ENCODE measurements at regions of chr1 and their contacts with region 1.

Region 1: GRCh38 chr1:107750358-107750959 is 214.5 kb downstream of the VAV3 start:
- ATAC-seq: peak; percentile 27 to 88 (median 72)
- H3K4me3 ChIP-seq: no peak overlapping the region
- H3K27ac ChIP-seq: no peak overlapping the region
- H3K4me1 ChIP-seq: no peaks in the 10 kb centered on the region

Region 2: GRCh38 chr1:107277022-107277421 is 473.4 kb before region 1 on chr1:
- in situ Hi-C with region 1: loop called in 1 of 9 experiments (anchors 25 kb)
- ATAC-seq: peak in 5 of 8 experiments; percentile 53 to 83 (median 72)
- H3K4me3 ChIP-seq: no peak overlapping the region
- H3K27ac ChIP-seq: no peak overlapping the region
- H3K4me1 ChIP-seq: no peaks in the 10 kb centered on the region

Region 3: DNA sequence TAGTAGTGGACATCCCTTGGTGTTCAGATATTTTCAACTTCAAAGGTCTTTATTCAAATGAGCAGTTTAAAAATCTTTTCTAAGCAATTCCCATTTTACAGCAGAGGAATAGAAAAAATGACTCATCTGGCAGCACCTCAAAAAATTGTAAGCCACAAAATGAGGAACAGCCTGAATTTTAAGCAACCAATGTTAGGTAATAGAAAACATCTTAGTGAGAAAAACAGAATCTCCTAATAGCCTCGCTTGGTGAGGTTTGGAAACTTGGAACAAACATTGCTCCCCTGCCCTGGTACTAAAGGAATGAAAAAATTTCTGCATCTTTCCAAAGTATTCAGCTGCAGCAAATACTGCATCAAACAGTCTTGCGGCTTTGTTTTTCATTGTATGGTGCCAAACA is 345.2 kb before region 1 on chr1:
- in situ Hi-C with region 1: loop called in 1 of 9 experiments (anchors 25 kb)
- ATAC-seq: peak in 1 of 8 experiments; percentile 27
- H3K4me3 ChIP-seq: no peak overlapping the region
- H3K27ac ChIP-seq: no peak overlapping the region
- H3K4me1 ChIP-seq: peaks cover 0 to 9% of the 10 kb centered on the region in 2 donors

Region 4: DNA sequence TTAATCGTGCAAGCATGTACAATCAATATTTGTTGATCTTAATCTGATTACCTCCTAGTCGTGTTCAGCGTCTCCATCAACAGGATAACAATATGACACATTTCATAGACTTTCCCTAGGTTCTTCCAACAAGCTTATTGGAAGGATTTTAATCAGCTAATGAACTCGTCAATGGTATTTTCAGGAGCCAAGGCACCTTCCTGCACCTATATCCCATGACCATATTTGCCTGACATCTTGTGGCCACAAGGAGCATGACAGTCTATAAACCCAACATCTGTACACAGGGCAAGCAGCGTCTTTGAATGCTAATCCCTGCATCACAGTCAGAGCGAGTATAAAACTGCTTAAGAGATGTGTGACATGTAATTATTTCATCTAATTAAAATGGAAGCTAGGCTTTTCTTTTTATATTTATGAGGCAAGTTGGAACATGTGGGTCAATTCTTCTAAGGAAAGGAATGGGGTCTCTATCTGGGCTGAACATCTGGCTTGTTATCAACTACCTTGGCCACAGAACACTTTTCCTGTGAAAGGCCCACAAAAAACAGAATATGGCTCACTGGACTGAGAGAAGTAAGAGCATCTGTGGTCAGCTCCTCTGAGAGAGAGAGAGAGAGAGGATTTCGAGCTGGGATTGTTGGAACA is 220.8 kb before region 1 on chr1:
- in situ Hi-C with region 1: loop called in 2 of 9 experiments (anchors 10 to 25 kb)
- ATAC-seq: peak; percentile 70 to 96 (median 94)
- H3K4me3 ChIP-seq: no peak overlapping the region
- H3K27ac ChIP-seq: no peak overlapping the region
- H3K4me1 ChIP-seq: peaks cover 18 to 19% of the 10 kb centered on the region in 2 donors

Region 5: DNA sequence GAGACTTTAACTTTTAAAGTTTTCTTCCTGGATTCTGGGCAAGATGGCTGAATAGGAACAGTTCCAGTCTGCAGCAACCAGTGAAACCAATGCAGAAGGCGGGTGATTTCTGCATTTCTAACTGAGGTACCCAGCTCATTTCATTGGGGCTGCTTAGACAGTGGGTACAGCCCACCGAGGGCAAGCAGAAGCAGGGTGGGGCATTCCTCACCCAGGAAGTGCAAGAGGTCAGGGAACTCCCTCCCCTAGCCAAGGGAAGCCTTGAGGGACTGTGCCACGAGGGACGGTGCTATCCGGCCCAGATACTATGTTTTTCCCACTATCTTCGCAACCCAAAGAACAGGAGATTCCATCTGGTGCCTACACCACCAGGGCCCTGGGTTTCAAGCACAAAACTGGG is 93.5 kb after region 1 on chr1:
- in situ Hi-C with region 1: no loop called
- ATAC-seq: no peak
- H3K4me3 ChIP-seq: no peak overlapping the region
- H3K27ac ChIP-seq: no peak overlapping the region
- H3K4me1 ChIP-seq: no peaks in the 10 kb centered on the region

Region 6: DNA sequence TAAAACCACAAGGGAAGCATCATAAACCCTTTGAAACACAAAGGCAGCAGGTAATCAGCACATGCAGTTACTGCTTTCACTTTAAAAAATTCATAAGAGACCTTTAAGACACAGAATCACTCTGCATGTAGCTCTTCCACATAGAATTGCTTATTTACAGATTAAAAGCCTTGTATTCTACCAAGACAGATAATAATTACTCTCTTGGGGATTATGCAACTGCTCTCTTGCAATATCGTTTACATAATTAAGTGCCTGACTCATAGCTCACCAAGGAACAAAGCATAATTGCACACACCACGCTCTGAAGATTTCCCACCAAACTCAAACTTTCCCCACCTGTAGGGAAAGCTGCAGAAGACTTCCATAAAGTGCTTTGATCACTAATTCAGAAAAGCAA is 126.6 kb after region 1 on chr1:
- in situ Hi-C with region 1: no loop called
- ATAC-seq: peak; percentile 38 to 90 (median 52)
- H3K4me3 ChIP-seq: no peak overlapping the region
- H3K27ac ChIP-seq: no peak overlapping the region
- H3K4me1 ChIP-seq: no peaks in the 10 kb centered on the region

Region 7: GRCh38 chr1:108107658-108108518 is 357.4 kb after region 1 on chr1:
- in situ Hi-C with region 1: no loop called
- ATAC-seq: peak in 2 of 8 experiments; percentile 97 to 98
- H3K4me3 ChIP-seq: no peak overlapping the region
- H3K27ac ChIP-seq: no peak overlapping the region
- H3K4me1 ChIP-seq: no peaks in the 10 kb centered on the region

Measured in motor neuron (in vitro differentiated cells).